ENCODE measurements at regions of chr14 and their contacts with region 1.

Region 1: DNA sequence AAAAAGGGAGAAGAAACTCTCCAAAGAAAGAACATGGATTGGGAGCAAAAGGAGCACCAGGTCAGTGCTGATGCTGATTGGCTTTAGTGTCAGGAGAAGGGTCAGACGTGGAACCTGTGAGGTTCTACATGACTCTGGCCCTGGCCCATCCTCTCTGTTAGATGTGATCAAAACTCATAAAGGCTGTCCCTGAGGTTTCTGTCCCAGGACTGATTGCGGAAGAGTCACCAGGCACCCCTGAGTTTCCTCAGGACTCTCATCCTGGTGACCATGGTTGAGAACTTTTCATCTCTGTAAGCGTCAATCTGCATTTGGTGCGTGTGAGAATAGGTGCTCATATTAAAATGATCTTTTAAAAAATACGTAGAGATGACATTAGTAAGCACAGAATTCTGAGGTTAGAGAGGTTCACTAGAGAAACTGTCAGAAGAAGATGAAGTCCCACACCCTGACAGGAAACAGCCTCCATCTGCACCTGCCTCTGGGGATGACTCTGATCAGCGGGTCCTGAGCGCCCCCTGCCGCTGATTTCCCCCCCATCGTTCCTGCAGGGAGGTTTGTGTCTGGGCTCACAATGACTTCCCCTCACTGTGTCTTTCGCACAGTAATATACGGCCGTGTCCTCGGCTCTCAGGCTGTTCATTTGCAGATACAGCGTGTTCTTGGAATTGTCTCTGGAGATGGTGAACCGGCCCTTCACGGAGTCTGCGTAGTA is 741.8 kb downstream of the TMEM121 start:
- DNase-seq: peak; percentile 68 to 97 (median 80)
- ATAC-seq: peak; percentile 95
- H3K4me3 ChIP-seq: no peak overlapping the region
- H3K4me3 Mint-ChIP-seq: no peak overlapping the region
- H3K27ac ChIP-seq: no peak overlapping the region
- H3K27ac Mint-ChIP-seq: peak overlapping the region; percentile 46
- H3K4me1 ChIP-seq: peaks cover 9% of the 10 kb centered on the region
- H3K4me1 Mint-ChIP-seq: peaks cover 11% of the 10 kb centered on the region
- H3K27me3 ChIP-seq: no peaks in the 10 kb centered on the region
- H3K27me3 Mint-ChIP-seq: peaks cover 24% of the 10 kb centered on the region
- CTCF ChIP-seq: peak; percentile 77

Region 2: GRCh38 chr14:106024983-106025604 is 243.1 kb before region 1 on chr14:
- CTCF ChIA-PET with region 1: no interaction called
- POLR2A ChIA-PET with region 1: no interaction called
- intact Hi-C with region 1: no loop called
- DNase-seq: peak in 11 of 14 experiments; percentile 13 to 56 (median 40)
- ATAC-seq: peak; percentile 96
- H3K4me3 ChIP-seq: no peak overlapping the region
- H3K4me3 Mint-ChIP-seq: peak overlapping the region; percentile 6
- H3K27ac ChIP-seq: no peak overlapping the region
- H3K27ac Mint-ChIP-seq: peak overlapping the region; percentile 37
- H3K4me1 ChIP-seq: peaks cover 10% of the 10 kb centered on the region
- H3K4me1 Mint-ChIP-seq: peaks cover 28% of the 10 kb centered on the region
- H3K27me3 ChIP-seq: no peaks in the 10 kb centered on the region
- H3K27me3 Mint-ChIP-seq: no peaks in the 10 kb centered on the region
- CTCF ChIP-seq: no peak

Region 3: GRCh38 chr14:106134886-106135285 is 133.3 kb before region 1 on chr14:
- CTCF ChIA-PET with region 1: no interaction called
- POLR2A ChIA-PET with region 1: no interaction called
- intact Hi-C with region 1: loop called in 1 of 2 experiments (anchors 10 kb)
- DNase-seq: no peak
- ATAC-seq: no peak
- H3K4me3 ChIP-seq: no peak overlapping the region
- H3K4me3 Mint-ChIP-seq: no peak overlapping the region
- H3K27ac ChIP-seq: no peak overlapping the region
- H3K27ac Mint-ChIP-seq: no peak overlapping the region
- H3K4me1 ChIP-seq: peaks cover 5% of the 10 kb centered on the region
- H3K4me1 Mint-ChIP-seq: peaks cover 21% of the 10 kb centered on the region
- H3K27me3 ChIP-seq: no peaks in the 10 kb centered on the region
- H3K27me3 Mint-ChIP-seq: no peaks in the 10 kb centered on the region
- CTCF ChIP-seq: no peak

Measured in CD4-positive, alpha-beta T cell (primary cell).